IMR-90 (cell line): ENCODE measurements at regions of chr11 and their contacts with region 1.

Region 1: DNA sequence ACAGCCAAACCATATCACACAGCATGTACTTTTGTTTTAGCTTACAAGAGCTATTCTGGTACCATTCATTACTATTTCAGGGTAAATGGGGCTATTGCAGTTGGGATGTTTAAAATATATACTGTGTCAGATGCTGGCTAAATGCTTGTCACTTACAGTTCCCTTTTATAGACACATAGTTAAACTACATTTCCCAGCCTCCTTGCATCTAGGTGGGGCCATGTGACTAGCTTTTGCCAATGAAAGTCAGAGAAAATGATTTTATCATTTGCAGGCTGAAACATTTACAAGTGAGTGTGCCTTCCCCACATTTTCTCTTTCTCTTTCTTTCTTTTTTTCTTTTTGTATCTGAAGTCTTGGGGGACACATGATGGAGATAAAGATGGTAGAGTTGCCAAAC is 7.8 kb upstream of the IFTAP start:
- DNase-seq: no peak
- ATAC-seq: no peak
- H3K4me3 ChIP-seq: no peak overlapping the region
- H3K27ac ChIP-seq: no peak overlapping the region
- H3K4me1 ChIP-seq: no peaks in the 10 kb centered on the region
- H3K27me3 ChIP-seq: no peaks in the 10 kb centered on the region; the same call in 1 of the 2 replicates
- CTCF ChIP-seq: no peak
- POLR2A ChIP-seq: no peak
- RAD21 ChIP-seq: no peak

Region 2: DNA sequence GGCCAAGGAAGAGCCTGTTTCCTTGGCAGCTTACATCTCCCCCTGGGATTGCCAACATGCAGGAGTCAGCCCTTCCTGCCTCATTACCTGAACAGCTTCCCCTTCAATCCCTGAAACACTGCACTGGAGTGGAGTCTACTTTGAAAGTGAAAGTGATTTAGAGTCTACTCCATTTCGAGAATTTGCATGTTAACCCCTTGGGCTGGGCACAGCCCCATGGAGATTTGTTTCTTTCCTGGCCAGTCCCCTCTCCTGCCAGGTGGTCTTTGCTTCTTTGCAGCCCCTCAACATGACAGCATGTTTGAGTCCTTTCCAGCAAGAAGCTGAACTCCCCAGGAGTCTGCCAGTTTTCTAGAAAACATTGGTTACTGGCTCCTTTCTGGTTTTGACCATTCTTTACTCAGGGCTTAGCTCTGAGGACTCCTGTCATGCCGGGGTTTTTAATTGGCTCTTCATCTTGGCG is 136.4 kb before region 1 on chr11:
- CTCF ChIA-PET with region 1: no interaction called
- POLR2A ChIA-PET with region 1: no interaction called
- dilution Hi-C with region 1: no loop called
- in situ Hi-C with region 1: no loop called
- intact Hi-C with region 1: no loop called
- DNase-seq: no peak
- ATAC-seq: peak; percentile 66
- H3K4me3 ChIP-seq: peak overlapping the region; percentile 3; the same call in 1 of the 2 replicates
- H3K27ac ChIP-seq: peak overlapping the region; percentile 12; the same call in 1 of the 2 replicates
- H3K4me1 ChIP-seq: peaks cover 28% of the 10 kb centered on the region
- H3K27me3 ChIP-seq: no peaks in the 10 kb centered on the region
- CTCF ChIP-seq: no peak
- POLR2A ChIP-seq: no peak
- RAD21 ChIP-seq: no peak

Region 3: GRCh38 chr11:36509694-36510566 is 76.6 kb before region 1 on chr11 and contains the start of gene TRAF6:
- CTCF ChIA-PET with region 1: no interaction called
- POLR2A ChIA-PET with region 1: no interaction called
- dilution Hi-C with region 1: no loop called
- in situ Hi-C with region 1: no loop called
- intact Hi-C with region 1: no loop called
- DNase-seq: peak; percentile 74
- ATAC-seq: peak; percentile 95
- H3K4me3 ChIP-seq: peak within 1 kb of the TSS; percentile 95
- H3K27ac ChIP-seq: peak within 1 kb of the TSS; percentile 97
- H3K4me1 ChIP-seq: no peaks in the 10 kb centered on the region
- H3K27me3 ChIP-seq: no peaks in the 10 kb centered on the region
- CTCF ChIP-seq: peak; percentile 80
- POLR2A ChIP-seq: peak; percentile 89
- RAD21 ChIP-seq: no peak; the same call in 1 of the 2 replicates
- total RNA-seq, gene TRAF6: 15.3 and 17.6 TPM in 2 replicates

Region 4: GRCh38 chr11:36622431-36623136 is 36.0 kb after region 1 on chr11:
- CTCF ChIA-PET with region 1: no interaction called
- POLR2A ChIA-PET with region 1: no interaction called
- dilution Hi-C with region 1: no loop called
- in situ Hi-C with region 1: no loop called
- intact Hi-C with region 1: loop called (anchors 5 kb)
- DNase-seq: peak; percentile 36
- ATAC-seq: peak; percentile 89
- H3K4me3 ChIP-seq: no peak overlapping the region
- H3K27ac ChIP-seq: no peak overlapping the region
- H3K4me1 ChIP-seq: no peaks in the 10 kb centered on the region
- H3K27me3 ChIP-seq: no peaks in the 10 kb centered on the region
- CTCF ChIP-seq: peak; percentile 48
- POLR2A ChIP-seq: no peak
- RAD21 ChIP-seq: peak; percentile 47

Region 5: DNA sequence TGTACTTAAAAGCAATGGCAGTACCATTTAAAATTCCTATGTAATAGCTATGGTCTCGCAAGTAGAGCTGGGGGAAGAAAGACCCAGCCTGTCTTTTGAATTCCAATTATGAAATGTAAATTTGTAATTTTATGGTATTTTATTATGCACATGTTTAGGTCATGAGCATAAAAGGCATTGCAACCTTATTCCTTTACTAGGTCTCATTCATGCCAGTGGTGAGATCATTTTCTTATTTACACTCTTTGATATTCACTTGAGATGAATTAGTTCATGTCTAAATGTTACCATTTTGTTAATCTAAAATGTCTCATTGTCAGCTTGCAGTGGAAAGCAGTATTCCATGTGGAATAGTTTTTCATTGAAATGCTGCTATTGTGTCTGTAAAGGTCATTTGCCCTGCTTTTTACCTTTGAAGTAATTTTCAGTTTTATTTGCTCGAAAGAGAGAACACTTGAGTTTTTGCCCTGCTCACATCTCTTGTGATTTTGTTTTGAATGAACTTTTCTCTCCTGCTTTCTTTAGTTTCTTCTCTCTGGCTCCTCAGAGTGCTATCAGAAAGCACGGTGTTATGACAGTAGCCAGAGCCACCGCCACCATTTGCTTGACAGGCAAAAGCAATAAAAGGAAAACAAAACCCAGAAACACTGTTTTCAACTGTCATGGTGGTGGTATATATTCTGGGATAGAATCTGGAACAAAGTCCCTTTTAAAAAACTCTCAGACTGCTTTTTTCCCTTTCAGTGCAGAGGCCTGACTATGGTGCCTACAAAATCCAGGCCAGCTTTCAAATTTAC is 48.7 kb after region 1 on chr11:
- CTCF ChIA-PET with region 1: no interaction called
- POLR2A ChIA-PET with region 1: no interaction called
- dilution Hi-C with region 1: no loop called
- in situ Hi-C with region 1: no loop called
- intact Hi-C with region 1: no loop called
- DNase-seq: no peak
- ATAC-seq: no peak
- H3K4me3 ChIP-seq: no peak overlapping the region
- H3K27ac ChIP-seq: no peak overlapping the region
- H3K4me1 ChIP-seq: no peaks in the 10 kb centered on the region
- H3K27me3 ChIP-seq: no peaks in the 10 kb centered on the region
- CTCF ChIP-seq: no peak
- POLR2A ChIP-seq: no peak
- RAD21 ChIP-seq: no peak